Activated CD4-positive, alpha-beta memory T cell treated with anti-CD3 and anti-CD28 coated beads for 36 hours (primary cell): ENCODE measurements at regions of chr14 and their contacts with region 1.

Region 1: DNA sequence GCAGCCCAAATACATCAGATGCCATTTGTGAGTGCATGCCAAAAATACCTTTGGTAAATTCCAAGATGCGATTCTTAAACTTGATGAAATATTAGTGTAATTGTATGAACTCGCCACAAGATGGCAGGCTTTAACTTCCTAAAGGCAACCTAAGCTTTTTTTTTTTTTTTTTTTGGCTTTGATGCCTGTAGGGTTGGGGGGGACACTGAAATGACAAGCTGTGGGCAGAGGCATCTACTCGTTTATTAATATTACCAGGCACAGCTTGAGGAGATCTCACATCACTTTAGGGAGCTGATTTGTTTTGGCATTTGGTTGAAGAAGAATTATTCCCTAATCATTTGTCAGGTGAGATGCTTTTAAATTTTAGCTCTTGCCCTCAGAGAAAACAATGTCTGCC is 126.7 kb upstream of the CCDC196 start:
- DNase-seq: no peak
- H3K4me3 Mint-ChIP-seq: no peak overlapping the region
- H3K27ac Mint-ChIP-seq: no peak overlapping the region
- H3K4me1 Mint-ChIP-seq: no peaks in the 10 kb centered on the region
- H3K27me3 Mint-ChIP-seq: no peaks in the 10 kb centered on the region

Region 2: DNA sequence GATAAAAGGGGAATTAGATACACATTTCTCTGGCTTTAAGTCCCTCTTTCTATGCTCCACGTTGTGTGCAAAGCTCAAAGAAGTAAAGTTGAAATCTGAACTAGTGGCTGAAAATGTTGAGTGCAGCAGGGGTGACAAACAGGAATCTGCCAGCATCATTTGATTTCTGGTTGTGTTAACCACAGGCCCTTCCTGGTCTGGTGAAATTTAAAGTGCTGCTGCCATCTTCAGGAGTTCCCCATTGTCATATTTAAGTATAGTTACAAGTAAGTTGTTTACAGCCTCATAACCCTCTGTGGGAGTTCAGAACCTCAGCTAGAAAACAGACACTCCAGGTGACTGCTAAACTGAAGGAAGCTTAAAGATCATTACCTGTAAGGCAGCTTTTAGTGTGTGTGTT is 35.8 kb after region 1 on chr14:
- CTCF ChIA-PET with region 1: interaction called, 49 read pairs
- POLR2A ChIA-PET with region 1: no interaction called
- intact Hi-C with region 1: loop called (anchors 2 kb)
- DNase-seq: peak; percentile 25
- H3K4me3 Mint-ChIP-seq: no peak overlapping the region
- H3K27ac Mint-ChIP-seq: no peak overlapping the region
- H3K4me1 Mint-ChIP-seq: peaks cover 9% of the 10 kb centered on the region
- H3K27me3 Mint-ChIP-seq: no peaks in the 10 kb centered on the region

Region 3: DNA sequence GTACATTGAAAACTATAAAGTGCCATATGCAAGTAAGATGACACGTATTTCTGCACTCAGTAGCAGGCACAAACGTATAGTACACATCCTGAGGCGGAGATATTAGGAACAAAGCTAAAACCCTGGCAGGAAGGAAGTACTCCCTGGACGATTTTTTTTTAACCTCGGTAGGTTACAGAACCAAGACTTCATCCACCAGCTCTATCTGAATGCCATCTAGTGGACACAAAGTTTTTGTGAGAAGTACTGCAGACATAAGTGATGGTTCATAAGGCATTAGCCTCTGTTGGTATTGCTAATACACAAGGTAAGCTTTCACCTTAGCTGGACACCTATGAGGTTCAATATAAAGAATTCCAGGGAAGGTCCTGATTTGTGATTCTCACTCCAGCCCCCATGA is 43.7 kb after region 1 on chr14:
- CTCF ChIA-PET with region 1: interaction called, 49 read pairs
- POLR2A ChIA-PET with region 1: no interaction called
- intact Hi-C with region 1: loop called (anchors 1 kb)
- DNase-seq: no peak
- H3K4me3 Mint-ChIP-seq: no peak overlapping the region
- H3K27ac Mint-ChIP-seq: no peak overlapping the region
- H3K4me1 Mint-ChIP-seq: peaks cover 3% of the 10 kb centered on the region
- H3K27me3 Mint-ChIP-seq: no peaks in the 10 kb centered on the region

Region 4: GRCh38 chr14:66624299-66624937 is 264.9 kb after region 1 on chr14:
- CTCF ChIA-PET with region 1: interaction called, 10 read pairs
- POLR2A ChIA-PET with region 1: no interaction called
- intact Hi-C with region 1: no loop called
- DNase-seq: peak; percentile 56
- H3K4me3 Mint-ChIP-seq: no peak overlapping the region
- H3K27ac Mint-ChIP-seq: no peak overlapping the region
- H3K4me1 Mint-ChIP-seq: peaks cover 4% of the 10 kb centered on the region
- H3K27me3 Mint-ChIP-seq: no peaks in the 10 kb centered on the region

Region 5: GRCh38 chr14:67111022-67111421 is 751.5 kb after region 1 on chr14:
- CTCF ChIA-PET with region 1: interaction called, 7 read pairs
- POLR2A ChIA-PET with region 1: no interaction called
- intact Hi-C with region 1: loop called (anchors 5 kb)
- DNase-seq: no peak
- H3K4me3 Mint-ChIP-seq: no peak overlapping the region
- H3K27ac Mint-ChIP-seq: no peak overlapping the region
- H3K4me1 Mint-ChIP-seq: no peaks in the 10 kb centered on the region
- H3K27me3 Mint-ChIP-seq: no peaks in the 10 kb centered on the region